PC-3 (cell line): ENCODE measurements at regions of chr1 and their contacts with region 1.

Region 1: DNA sequence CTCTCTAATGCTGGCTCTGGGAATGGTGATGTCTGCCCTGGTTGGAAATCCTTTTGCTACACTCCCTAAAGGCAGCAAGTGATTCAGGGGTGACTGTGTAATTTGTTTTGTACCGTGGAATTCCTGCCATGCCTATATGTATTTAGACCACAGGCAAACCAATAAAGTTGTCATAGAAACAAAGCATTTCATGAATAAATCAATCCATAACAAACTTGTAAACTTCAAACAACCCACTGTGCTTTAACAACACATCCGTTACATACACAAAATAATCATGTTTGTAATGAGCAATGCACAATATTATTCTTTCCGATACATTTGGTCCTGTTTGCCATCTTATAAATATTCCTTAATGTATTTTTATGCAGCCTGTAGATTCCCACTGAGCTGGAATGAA is 330.3 kb upstream of the SNX7 start:
- DNase-seq: peak; percentile 96
- ATAC-seq: peak; percentile 91
- H3K4me3 ChIP-seq: no peak overlapping the region; the same call in 1 of the 2 replicates
- H3K27ac ChIP-seq: peak overlapping the region; percentile 97
- H3K4me1 ChIP-seq: peaks cover 64% of the 10 kb centered on the region
- H3K27me3 ChIP-seq: no peaks in the 10 kb centered on the region
- CTCF ChIP-seq: no peak

Region 2: GRCh38 chr1:98001764-98002163 is 329.5 kb before region 1 on chr1:
- CTCF ChIA-PET with region 1: no interaction called
- POLR2A ChIA-PET with region 1: no interaction called
- intact Hi-C with region 1: loop called (anchors 5 kb)
- DNase-seq: peak; percentile 60
- ATAC-seq: peak; percentile 26; the same call in 1 of the 2 replicates
- H3K4me3 ChIP-seq: no peak overlapping the region
- H3K27ac ChIP-seq: no peak overlapping the region
- H3K4me1 ChIP-seq: peaks cover 45% of the 10 kb centered on the region
- H3K27me3 ChIP-seq: no peaks in the 10 kb centered on the region
- CTCF ChIP-seq: peak; percentile 75

Region 3: GRCh38 chr1:98110674-98111073 is 220.6 kb before region 1 on chr1:
- CTCF ChIA-PET with region 1: no interaction called
- POLR2A ChIA-PET with region 1: interaction called, 6 read pairs
- intact Hi-C with region 1: loop called (anchors 2 kb)
- DNase-seq: peak; percentile 77
- ATAC-seq: peak; percentile 81
- H3K4me3 ChIP-seq: no peak overlapping the region
- H3K27ac ChIP-seq: peak overlapping the region; percentile 59
- H3K4me1 ChIP-seq: peaks cover 42% of the 10 kb centered on the region
- H3K27me3 ChIP-seq: no peaks in the 10 kb centered on the region
- CTCF ChIP-seq: no peak; the same call in 1 of the 2 replicates

Region 4: DNA sequence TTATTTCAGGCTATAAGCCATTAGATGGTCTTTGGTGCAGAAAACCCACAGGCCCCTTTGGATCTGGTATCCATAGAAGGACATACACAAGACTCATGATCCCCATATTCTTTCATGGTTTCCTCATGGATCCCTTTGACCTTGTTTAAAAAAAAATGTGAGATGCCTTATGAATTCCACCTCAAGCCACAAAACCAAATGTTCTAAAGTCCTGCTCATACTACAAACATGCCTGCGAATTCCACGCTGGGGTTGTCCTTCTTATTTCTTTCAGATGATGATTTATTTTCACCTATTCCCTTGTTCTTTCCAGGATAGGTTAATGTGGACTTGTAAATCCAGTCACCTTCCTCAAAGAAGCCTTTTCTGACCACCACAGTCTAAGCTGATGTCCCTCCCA is 153.5 kb before region 1 on chr1:
- CTCF ChIA-PET with region 1: no interaction called
- POLR2A ChIA-PET with region 1: no interaction called
- intact Hi-C with region 1: loop called (anchors 2 kb)
- DNase-seq: no peak
- ATAC-seq: no peak
- H3K4me3 ChIP-seq: no peak overlapping the region
- H3K27ac ChIP-seq: no peak overlapping the region
- H3K4me1 ChIP-seq: 0 out of 2 replicates have a peak, but pooled peaks cover 4% of the 10 kb centered on the region
- H3K27me3 ChIP-seq: no peaks in the 10 kb centered on the region
- CTCF ChIP-seq: no peak

Region 5: GRCh38 chr1:98388441-98388840 is 57.2 kb after region 1 on chr1:
- CTCF ChIA-PET with region 1: no interaction called
- POLR2A ChIA-PET with region 1: interaction called, 3 read pairs
- intact Hi-C with region 1: loop called (anchors 2 kb)
- DNase-seq: peak; percentile 87
- ATAC-seq: peak; percentile 90
- H3K4me3 ChIP-seq: 0 out of 2 replicates have a peak overlapping the region, but pooled peaks have one; percentile 17
- H3K27ac ChIP-seq: peak overlapping the region; percentile 89
- H3K4me1 ChIP-seq: peaks cover 48% of the 10 kb centered on the region
- H3K27me3 ChIP-seq: no peaks in the 10 kb centered on the region
- CTCF ChIP-seq: no peak

Region 6: GRCh38 chr1:98468111-98468717 is 137.0 kb after region 1 on chr1:
- CTCF ChIA-PET with region 1: interaction called, 3 read pairs
- POLR2A ChIA-PET with region 1: no interaction called
- intact Hi-C with region 1: loop called (anchors 1 kb)
- DNase-seq: peak; percentile 89
- ATAC-seq: peak; percentile 81
- H3K4me3 ChIP-seq: no peak overlapping the region
- H3K27ac ChIP-seq: peak overlapping the region; percentile 7; the same call in 1 of the 2 replicates
- H3K4me1 ChIP-seq: peaks cover 16% of the 10 kb centered on the region
- H3K27me3 ChIP-seq: no peaks in the 10 kb centered on the region
- CTCF ChIP-seq: peak; percentile 75